Right ventricle myocardium superior (tissue), 1 donor: ENCODE measurements at regions of chr6 and their contacts with region 1.

Region 1: DNA sequence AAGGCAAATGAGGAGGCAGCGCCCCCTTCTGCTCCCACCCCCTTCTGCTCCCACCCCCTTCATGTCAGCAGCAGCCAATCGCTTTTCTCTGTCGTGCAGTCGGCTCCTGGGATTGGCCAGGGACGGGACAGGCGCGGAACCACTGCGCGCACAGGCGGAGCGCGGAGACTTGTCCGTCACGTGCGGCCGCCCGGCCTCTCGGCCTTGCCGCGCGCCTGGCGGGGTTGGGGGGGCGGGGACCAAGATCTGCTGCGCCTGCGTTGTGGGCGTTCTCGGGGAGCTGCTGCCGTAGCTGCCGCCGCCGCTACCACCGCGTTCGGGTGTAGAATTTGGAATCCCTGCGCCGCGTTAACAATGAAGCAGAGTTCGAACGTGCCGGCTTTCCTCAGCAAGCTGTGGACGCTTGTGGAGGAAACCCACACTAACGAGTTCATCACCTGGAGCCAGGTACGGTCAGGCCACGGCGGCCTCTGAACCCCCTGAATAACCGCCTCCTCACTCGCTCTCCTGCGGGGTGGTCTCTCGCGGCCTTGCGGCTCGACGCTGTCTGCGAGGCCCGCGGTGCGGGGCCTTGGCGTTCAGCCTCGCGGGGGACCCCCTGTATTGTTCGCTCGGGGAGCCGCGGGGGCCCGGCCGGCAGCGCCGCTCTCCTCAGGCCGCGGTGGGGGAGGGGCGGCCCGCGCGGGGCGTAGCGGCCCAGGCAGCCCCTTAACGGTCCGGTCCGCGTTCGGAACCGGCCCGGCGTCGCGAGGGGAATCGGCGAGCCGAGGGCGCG is at the start of gene HSF2:
- DNase-seq: peak; percentile 97
- ATAC-seq: peak; percentile 99
- total RNA-seq, gene HSF2: 19.5 TPM

Region 2: GRCh38 chr6:122471107-122472021 is 71.8 kb after region 1 on chr6 and contains the start of gene SERINC1:
- intact Hi-C with region 1: loop called (anchors 5 kb)
- DNase-seq: peak; percentile 98
- ATAC-seq: peak; percentile 100
- total RNA-seq, gene SERINC1: 142 TPM